Naive thymus-derived CD8-positive, alpha-beta T cell (primary cell): ENCODE measurements at regions of chr6 and their contacts with region 1.

Region 1: DNA sequence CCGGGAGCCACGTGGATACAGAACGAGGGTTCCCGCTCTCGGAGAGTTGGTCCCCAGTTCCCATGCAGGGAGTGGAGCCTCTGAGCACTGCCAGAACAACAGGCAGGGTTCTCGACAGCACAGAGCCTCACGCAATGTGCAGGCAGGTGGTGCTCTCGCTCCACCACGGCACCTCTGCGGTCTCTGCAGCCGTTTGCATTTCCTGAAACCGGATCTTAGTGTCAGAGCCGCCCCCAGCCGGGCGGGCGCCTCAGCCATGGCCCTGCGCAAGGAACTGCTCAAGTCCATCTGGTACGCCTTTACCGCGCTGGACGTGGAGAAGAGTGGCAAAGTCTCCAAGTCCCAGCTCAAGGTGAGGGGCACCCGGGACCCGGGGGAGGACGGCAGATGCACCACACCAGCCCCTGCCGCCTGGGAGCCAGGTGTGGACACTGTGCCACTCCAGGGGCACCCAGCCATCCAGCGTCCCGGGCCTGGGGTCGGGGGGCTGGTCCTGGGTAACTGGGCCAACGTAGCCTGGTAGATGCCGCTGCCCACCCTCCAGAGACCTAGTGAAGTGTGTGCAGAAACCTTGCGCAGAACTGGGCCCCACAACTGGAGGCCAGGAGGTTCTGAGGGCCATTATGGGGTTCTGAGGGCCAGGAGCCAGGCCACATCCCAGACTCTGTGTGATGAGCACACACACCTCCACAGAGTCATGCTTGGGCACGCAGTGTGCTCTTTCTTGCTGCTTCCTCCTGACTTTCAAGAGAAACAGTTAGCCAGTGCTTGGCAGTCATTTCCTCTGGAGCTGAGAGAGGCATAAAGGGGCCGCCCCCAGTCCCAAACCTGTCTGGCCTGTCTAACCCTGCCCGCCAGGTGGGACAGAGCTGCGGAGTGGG is at the start of gene DEF6:
- DNase-seq: peak; percentile 76 to 93 (median 86)
- ATAC-seq: peak; percentile 82 to 87
- H3K4me3 Mint-ChIP-seq: peak within 1 kb of the TSS; percentile 82 to 98 (median 90)
- H3K27ac Mint-ChIP-seq: peak within 1 kb of the TSS; percentile 91 to 100 (median 97)
- H3K4me1 Mint-ChIP-seq: peaks cover 30 to 50% (median 47%) of the 10 kb centered on the region in 4 donors
- H3K27me3 Mint-ChIP-seq: no peaks in the 10 kb centered on the region
- polyA plus RNA-seq, gene DEF6: 93.7 to 196 (median 136) TPM

Region 2: GRCh38 chr6:35327349-35328027 is 29.6 kb after region 1 on chr6:
- POLR2A ChIA-PET with region 1: interaction called, 766 read pairs
- DNase-seq: peak; percentile 58 to 88 (median 76)
- ATAC-seq: peak; percentile 75 to 84
- H3K4me3 Mint-ChIP-seq: peak overlapping the region in 4 of 10 donors; percentile 24 to 47 (median 34)
- H3K27ac Mint-ChIP-seq: peak overlapping the region; percentile 14 to 94 (median 86)
- H3K4me1 Mint-ChIP-seq: peaks cover 9 to 30% (median 26%) of the 10 kb centered on the region in 4 donors
- H3K27me3 Mint-ChIP-seq: no peaks in the 10 kb centered on the region

Region 3: GRCh38 chr6:35452186-35453090 is 154.6 kb after region 1 on chr6 and contains the start of gene FANCE:
- POLR2A ChIA-PET with region 1: interaction called, 51 read pairs
- DNase-seq: peak; percentile 59 to 91 (median 77)
- ATAC-seq: peak; percentile 74 to 77
- H3K4me3 Mint-ChIP-seq: peak within 1 kb of the TSS; percentile 82 to 92 (median 86)
- H3K27ac Mint-ChIP-seq: peak within 1 kb of the TSS; percentile 51 to 93 (median 82)
- H3K4me1 Mint-ChIP-seq: peaks cover 14 to 54% (median 40%) of the 10 kb centered on the region in 4 donors
- H3K27me3 Mint-ChIP-seq: no peaks in the 10 kb centered on the region
- polyA plus RNA-seq, gene FANCE: 3.2 to 5.5 (median 3.3) TPM